A673 (cell line): ENCODE measurements at regions of chr5 and their contacts with region 1.

Region 1: DNA sequence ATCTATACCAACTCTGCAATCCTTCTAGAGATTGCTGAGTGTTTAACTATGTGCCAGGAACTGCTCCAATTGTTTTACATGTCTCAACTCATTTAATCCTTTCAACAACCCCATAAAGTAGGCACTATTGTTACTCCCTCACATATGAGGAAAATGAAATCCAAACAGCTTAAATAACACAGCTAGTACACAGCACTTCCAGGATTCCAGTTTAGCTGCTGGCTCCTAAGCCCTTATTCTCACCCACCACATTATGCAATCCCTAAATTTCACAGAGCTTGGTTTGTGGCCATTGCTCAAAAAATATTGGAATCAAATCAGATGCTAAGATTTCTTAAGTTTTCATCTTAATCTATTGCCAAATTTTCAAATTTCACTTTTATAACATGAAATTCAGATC is 84.9 kb downstream of the PRELID2 start:
- DNase-seq: no peak
- H3K4me3 ChIP-seq: no peak overlapping the region
- H3K27ac ChIP-seq: no peak overlapping the region
- H3K4me1 ChIP-seq: peaks cover 19% of the 10 kb centered on the region
- H3K27me3 ChIP-seq: no peaks in the 10 kb centered on the region
- CTCF ChIP-seq: no peak

Region 2: GRCh38 chr5:145825751-145826180 is 75.6 kb after region 1 on chr5:
- CTCF ChIA-PET with region 1: no interaction called
- POLR2A ChIA-PET with region 1: no interaction called
- intact Hi-C with region 1: loop called (anchors 2 kb)
- DNase-seq: peak; percentile 83
- H3K4me3 ChIP-seq: no peak overlapping the region
- H3K27ac ChIP-seq: no peak overlapping the region
- H3K4me1 ChIP-seq: peaks cover 69% of the 10 kb centered on the region
- H3K27me3 ChIP-seq: no peaks in the 10 kb centered on the region
- CTCF ChIP-seq: peak; percentile 87